Prostate gland (tissue), 2 donors: ENCODE measurements at regions of chr14 and their contacts with region 1.

Region 1: DNA sequence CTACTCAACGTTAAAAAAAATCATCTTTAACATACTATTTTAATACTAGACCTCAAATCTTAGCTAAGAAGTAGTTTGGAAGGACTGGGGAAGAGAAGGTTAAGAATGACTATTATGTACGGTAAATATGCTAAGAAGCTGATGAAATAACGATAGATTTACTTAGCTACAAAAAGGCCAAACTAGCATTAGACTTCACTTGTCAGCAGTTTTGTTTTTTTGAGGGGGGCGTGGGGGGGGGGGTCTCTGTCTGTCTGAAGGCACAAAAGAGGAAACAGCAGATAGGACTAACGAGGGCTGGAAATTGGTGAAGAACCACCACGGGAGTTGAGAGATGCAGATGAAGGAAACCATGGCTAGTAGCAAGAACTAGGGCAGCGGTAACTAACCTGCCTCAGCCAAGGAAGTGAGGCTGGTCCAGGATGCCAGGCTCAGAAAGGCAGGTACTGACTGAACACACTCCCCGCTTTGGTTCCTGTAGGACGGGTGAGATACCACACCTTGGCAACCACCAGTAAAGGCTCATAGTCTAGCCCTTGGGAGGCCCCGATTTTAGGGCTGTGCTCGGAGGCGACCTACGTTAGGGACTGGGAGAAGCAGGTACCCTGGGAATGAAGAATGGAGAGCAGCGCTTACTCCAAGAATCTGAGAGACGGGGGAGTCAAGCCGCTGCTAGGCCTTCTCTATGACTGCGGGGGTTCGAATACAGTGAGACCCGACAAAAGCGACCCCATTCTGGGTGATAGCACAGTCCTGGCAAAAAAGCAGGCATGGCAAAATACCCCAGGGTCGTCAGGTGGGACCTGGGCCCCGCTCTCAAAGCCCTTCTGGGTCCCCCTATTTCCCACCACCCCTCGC is 675 bp downstream of the NEDD8 start:
- DNase-seq: no peak
- H3K4me3 ChIP-seq: peak overlapping the region; percentile 71 to 72
- H3K27ac ChIP-seq: peak overlapping the region; percentile 83 to 88
- H3K4me1 ChIP-seq: peaks cover 7% of the 10 kb centered on the region
- H3K27me3 ChIP-seq: no peaks in the 10 kb centered on the region
- CTCF ChIP-seq: no peak
- POLR2A ChIP-seq: no peak

Region 2: GRCh38 chr14:24162093-24162492 is 69.4 kb before region 1 on chr14:
- intact Hi-C with region 1: no loop called
- DNase-seq: no peak
- H3K4me3 ChIP-seq: peak overlapping the region; percentile 42 to 52
- H3K27ac ChIP-seq: peak overlapping the region; percentile 92 to 96
- H3K4me1 ChIP-seq: peaks cover 11% of the 10 kb centered on the region
- H3K27me3 ChIP-seq: no peaks in the 10 kb centered on the region
- CTCF ChIP-seq: no peak
- POLR2A ChIP-seq: no peak

Region 3: GRCh38 chr14:24215495-24216344 is 15.8 kb before region 1 on chr14 and contains the start of gene MDP1:
- intact Hi-C with region 1: loop called (anchors 1 kb)
- DNase-seq: peak; percentile 82
- H3K4me3 ChIP-seq: peak within 1 kb of the TSS; percentile 51 to 68
- H3K27ac ChIP-seq: peak within 1 kb of the TSS; percentile 83 to 88
- H3K4me1 ChIP-seq: no peaks in the 10 kb centered on the region
- H3K27me3 ChIP-seq: no peaks in the 10 kb centered on the region
- CTCF ChIP-seq: peak in 3 of 4 experiments; percentile 64 to 72 (median 64)
- POLR2A ChIP-seq: peak; percentile 68
- total RNA-seq, gene MDP1: 19.1 to 25.5 TPM